GM18951 (cell line): ENCODE measurements at regions of chr3 and their contacts with region 1.

Region 1: GRCh38 chr3:71652781-71653413 is 69.4 kb upstream of the FOXP1 start:
- POLR2A ChIP-seq: no peak

Region 2: GRCh38 chr3:70531063-70531657 is 1121.7 kb before region 1 on chr3:
- in situ Hi-C with region 1: loop called (anchors 25 kb)
- POLR2A ChIP-seq: no peak

Region 3: GRCh38 chr3:71907996-71908395 is 255.1 kb after region 1 on chr3:
- in situ Hi-C with region 1: no loop called
- POLR2A ChIP-seq: no peak